Colonic mucosa (tissue), 4 donors: ENCODE measurements at regions of chr4 and their contacts with region 1.

Region 1: GRCh38 chr4:76377911-76378310 is 43.0 kb downstream of the CCDC158 start:
- DNase-seq: peak; percentile 58
- H3K4me3 ChIP-seq: no peak overlapping the region
- H3K27ac ChIP-seq: no peak overlapping the region
- H3K4me1 ChIP-seq: no peaks in the 10 kb centered on the region
- H3K27me3 ChIP-seq: no peaks in the 10 kb centered on the region
- CTCF ChIP-seq: peak; percentile 47

Region 2: DNA sequence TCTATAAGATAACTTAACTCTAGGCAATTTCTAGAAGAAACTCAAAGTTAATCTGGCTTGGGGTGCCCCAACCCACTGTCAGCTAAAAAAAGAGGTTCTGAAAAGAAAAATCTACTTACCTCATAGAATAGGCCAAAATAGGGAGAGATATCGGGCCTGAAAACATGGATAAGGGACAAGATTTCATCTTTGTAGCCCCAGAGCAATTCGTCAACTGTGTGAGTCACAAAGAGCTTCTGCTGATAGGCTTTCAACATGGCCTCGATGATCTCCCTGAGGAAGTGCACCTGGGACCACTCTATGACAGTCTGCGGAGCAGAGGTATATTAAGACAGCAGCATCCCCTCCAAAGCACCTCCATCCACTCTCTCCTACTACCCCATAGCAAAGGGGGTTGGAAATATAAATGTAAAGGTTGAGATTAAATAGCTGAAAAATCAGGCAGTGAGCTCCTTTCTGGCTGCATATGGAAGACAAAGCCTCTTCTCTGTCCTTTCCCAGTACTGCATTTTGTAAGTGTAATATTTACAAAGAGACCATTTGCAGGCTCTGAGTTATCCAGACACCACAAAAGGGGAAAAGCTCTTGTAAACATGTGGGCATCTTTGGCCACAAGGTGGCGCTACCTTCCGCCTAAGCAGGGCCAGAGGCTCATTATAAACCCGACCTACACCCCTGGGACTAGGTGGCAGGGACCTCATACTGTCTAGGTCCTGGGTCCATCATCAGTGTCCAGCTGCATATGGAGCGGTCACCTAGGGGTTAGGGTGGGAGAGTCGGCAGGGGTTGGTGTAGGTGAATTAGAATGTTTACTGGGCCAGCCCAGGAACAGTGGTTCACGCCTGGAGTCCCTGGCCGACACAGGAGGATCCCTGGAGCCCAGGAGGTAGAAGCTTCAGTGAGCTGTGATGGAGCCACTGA is 198.3 kb before region 1 on chr4:
- intact Hi-C with region 1: loop called (anchors 5 kb)
- DNase-seq: peak; percentile 91
- H3K4me3 ChIP-seq: no peak overlapping the region
- H3K27ac ChIP-seq: no peak overlapping the region
- H3K4me1 ChIP-seq: no peaks in the 10 kb centered on the region
- H3K27me3 ChIP-seq: no peaks in the 10 kb centered on the region
- CTCF ChIP-seq: peak; percentile 90

Region 3: DNA sequence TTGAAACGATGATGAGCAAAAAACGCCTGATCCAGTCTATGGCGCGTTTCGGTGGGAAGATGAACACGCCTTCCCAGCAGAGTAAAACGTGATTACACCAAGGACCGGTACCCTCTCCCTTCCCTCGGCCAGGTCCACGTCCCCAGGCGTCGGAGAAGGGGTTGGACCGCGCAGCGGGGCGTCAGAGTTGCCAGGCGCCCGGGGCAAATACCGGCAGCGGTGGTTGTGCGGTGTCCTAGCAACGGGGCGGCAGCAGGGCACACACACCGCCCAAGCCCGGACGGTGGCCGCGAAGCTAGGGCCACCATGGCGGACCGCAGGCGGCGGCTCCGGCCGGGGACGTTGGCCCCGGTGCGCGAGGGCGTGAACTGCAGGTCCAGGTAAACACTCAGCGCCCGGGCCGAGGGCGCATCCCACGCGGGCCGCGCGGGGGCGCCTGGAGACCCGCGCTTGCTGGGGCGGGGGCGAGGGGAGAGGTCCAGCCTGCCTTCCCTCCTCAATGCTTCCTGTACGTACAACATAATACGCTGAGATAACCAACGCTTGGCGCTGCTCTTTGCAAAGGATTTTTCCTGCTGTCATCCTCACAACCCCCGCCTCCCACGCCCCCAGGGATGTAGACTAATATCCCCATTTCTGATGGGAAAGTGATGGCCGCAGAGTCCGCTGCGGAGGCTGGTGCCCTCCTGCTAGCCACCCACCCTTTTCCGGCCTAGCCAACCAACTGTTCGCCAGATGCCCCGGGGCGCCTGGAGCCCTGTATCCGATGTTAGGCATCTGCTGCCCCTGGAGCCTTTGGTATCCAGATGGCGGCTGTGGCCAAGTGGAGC is 126.3 kb before region 1 on chr4 and contains the start of gene FAM47E:
- intact Hi-C with region 1: loop called (anchors 5 kb)
- DNase-seq: peak; percentile 76
- H3K4me3 ChIP-seq: peak within 1 kb of the TSS; percentile 70
- H3K27ac ChIP-seq: peak within 1 kb of the TSS; percentile 27
- H3K4me1 ChIP-seq: no peaks in the 10 kb centered on the region
- H3K27me3 ChIP-seq: no peaks in the 10 kb centered on the region
- CTCF ChIP-seq: peak; percentile 40
- total RNA-seq, gene FAM47E: 3.9 to 4.8 TPM

Region 4: DNA sequence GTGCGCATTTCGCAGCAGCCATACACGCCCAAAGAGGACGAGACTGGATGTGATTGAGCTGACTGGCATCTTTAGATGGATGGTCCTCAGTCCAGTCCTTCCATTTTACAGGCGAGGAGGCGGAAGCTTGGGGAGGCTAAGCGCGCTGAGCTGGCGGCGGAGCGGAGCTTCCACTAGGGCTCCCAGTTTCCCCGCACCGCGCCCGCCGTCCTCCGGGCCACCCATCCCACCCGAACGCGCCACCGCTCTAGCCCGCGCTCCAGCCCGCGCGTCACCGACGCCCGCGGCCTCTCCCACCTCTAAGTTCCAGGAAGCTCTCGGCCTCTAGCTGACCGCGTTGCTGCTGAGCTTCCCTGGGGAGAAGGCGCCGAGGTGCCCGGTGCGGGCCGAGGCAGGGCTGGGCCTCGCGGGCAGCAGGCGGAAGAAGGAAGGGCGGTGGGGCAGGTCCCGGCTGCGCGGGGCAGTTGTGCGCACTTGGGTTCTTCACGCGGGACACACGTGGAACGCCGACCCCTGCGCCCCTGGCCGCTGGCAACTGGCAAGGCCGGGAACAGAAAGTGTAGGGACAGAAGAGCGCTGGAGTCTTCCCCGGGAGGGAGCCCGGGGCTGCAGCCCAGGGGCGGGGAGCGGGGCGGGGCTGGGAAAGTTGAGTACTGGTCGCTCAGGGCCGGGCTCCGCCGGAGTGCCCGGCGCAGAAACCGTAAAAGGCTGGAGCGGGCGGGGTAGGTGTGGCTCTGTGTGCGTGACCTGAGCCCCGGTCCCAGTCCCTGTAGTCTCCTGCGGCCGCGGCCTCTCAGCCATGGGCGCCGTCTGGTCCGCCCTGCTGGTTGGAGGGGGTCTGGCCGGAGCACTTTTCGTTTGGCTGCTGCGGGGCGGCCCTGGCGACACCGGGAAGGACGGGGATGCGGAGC is 71.7 kb before region 1 on chr4 and contains the start of gene STBD1:
- intact Hi-C with region 1: loop called (anchors 5 kb)
- DNase-seq: peak; percentile 92
- H3K4me3 ChIP-seq: peak within 1 kb of the TSS; percentile 74
- H3K27ac ChIP-seq: peak within 1 kb of the TSS; percentile 86
- H3K4me1 ChIP-seq: peaks cover under 1% of the 10 kb centered on the region
- H3K27me3 ChIP-seq: no peaks in the 10 kb centered on the region
- CTCF ChIP-seq: no peak
- total RNA-seq, gene STBD1: 11.8 to 39.2 TPM